Right lobe of liver (tissue), 6 donors: ENCODE measurements at regions of chr14 and their contacts with region 1.

Region 1: DNA sequence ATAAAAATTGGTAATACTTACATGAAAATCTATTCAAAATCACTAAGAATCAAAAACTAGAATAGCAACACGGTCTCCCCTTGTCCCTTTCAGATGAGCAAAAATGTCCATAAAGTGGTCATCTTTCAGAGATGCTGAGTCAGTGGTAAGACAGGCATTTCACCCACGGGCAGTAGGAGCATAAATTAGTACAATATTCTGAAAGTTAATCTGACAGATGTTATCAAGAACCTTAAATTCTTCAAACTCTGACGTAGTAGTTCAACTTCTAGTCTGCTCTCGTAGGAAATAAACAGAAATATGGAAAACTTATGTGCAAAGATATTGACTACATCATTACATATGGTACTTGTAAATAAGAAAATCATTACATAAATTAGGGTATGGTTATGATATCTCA is 33.1 kb upstream of the GNPNAT1 start:
- DNase-seq: no peak
- ATAC-seq: no peak
- H3K4me3 ChIP-seq: no peak overlapping the region
- H3K27ac ChIP-seq: no peak overlapping the region
- H3K4me1 ChIP-seq: peaks cover 0 to 19% (median 8%) of the 10 kb centered on the region in 4 donors
- H3K27me3 ChIP-seq: no peaks in the 10 kb centered on the region
- CTCF ChIP-seq: no peak
- POLR2A ChIP-seq: no peak

Region 2: GRCh38 chr14:52950898-52951689 is 126.6 kb after region 1 on chr14 and contains the start of gene FERMT2:
- intact Hi-C with region 1: loop called in 1 of 2 experiments (anchors 10 kb)
- DNase-seq: peak; percentile 90 to 93 (median 92)
- ATAC-seq: peak; percentile 81 to 94 (median 85)
- H3K4me3 ChIP-seq: peak within 1 kb of the TSS; percentile 74 to 88 (median 76)
- H3K27ac ChIP-seq: peak within 1 kb of the TSS; percentile 96 to 98 (median 98)
- H3K4me1 ChIP-seq: peaks cover 0 to 22% (median 9%) of the 10 kb centered on the region in 4 donors
- H3K27me3 ChIP-seq: no peaks in the 10 kb centered on the region
- CTCF ChIP-seq: peak in 1 of 4 donors; percentile 6
- POLR2A ChIP-seq: peak; percentile 87
- total RNA-seq, gene FERMT2: 40.4 to 64.5 (median 53.3) TPM

Region 3: GRCh38 chr14:53055003-53055402 is 230.5 kb after region 1 on chr14:
- intact Hi-C with region 1: loop called in 1 of 2 experiments (anchors 10 kb)
- DNase-seq: no peak
- ATAC-seq: peak; percentile 90 to 95 (median 92)
- H3K4me3 ChIP-seq: no peak overlapping the region
- H3K27ac ChIP-seq: no peak overlapping the region
- H3K4me1 ChIP-seq: no peaks in the 10 kb centered on the region
- H3K27me3 ChIP-seq: no peaks in the 10 kb centered on the region
- CTCF ChIP-seq: peak; percentile 62 to 87 (median 85)
- POLR2A ChIP-seq: no peak